Mammary epithelial cell (primary cell): ENCODE measurements at regions of chr2 and their contacts with region 1.

Region 1: GRCh38 chr2:151771599-151772358 is 37.5 kb upstream of the NEB start:
- DNase-seq: no peak
- H3K4me3 ChIP-seq: no peak overlapping the region
- H3K27ac ChIP-seq: no peak overlapping the region
- H3K4me1 ChIP-seq: no peaks in the 10 kb centered on the region
- H3K27me3 ChIP-seq: no peaks in the 10 kb centered on the region
- CTCF ChIP-seq: no peak

Region 2: DNA sequence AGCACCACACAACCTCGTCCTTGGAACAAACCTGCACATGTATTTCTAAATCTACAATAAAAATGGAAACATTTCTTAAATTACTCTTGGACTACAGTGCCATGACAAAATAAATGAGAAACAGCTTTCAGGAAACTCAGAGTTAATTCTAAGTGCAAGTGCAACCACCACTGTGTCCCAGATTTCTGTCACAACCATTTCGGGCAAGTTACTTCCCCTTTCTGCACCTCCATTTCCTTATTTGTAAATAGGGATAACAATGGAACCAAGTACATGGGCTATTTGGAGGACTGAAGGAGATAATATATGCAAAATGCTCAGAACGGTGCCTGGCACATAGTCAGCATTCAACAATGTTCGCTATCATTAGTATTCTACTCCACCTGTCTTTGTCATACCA is 233.8 kb after region 1 on chr2:
- CTCF ChIA-PET with region 1: no interaction called
- dilution Hi-C with region 1: no loop called
- in situ Hi-C with region 1: no loop called
- intact Hi-C with region 1: loop called (anchors 10 kb)
- DNase-seq: no peak
- H3K4me3 ChIP-seq: no peak overlapping the region
- H3K27ac ChIP-seq: no peak overlapping the region
- H3K4me1 ChIP-seq: no peaks in the 10 kb centered on the region
- H3K27me3 ChIP-seq: peaks cover 3% of the 10 kb centered on the region
- CTCF ChIP-seq: no peak

Region 3: DNA sequence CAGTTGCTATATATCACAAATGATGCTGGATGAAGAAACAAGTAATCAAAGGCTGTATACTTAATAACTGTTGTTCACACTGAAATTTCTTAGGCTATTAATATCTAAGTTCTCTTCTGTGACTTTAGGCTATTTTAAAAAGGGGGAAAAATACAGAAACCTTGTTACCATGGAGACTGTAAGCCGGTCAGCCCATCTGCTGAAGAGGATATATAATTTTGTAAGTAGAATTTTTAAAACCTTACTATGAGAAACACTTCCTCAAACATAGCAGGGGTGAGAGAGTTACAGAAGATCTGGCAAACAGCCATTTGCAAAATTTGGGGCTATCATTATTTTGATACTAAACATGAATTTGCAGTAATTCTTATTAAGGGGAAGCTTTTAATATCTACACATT is 299.3 kb after region 1 on chr2:
- CTCF ChIA-PET with region 1: interaction called, 10 read pairs
- dilution Hi-C with region 1: no loop called
- in situ Hi-C with region 1: no loop called
- intact Hi-C with region 1: no loop called
- DNase-seq: no peak
- H3K4me3 ChIP-seq: no peak overlapping the region
- H3K27ac ChIP-seq: no peak overlapping the region
- H3K4me1 ChIP-seq: no peaks in the 10 kb centered on the region
- H3K27me3 ChIP-seq: no peaks in the 10 kb centered on the region
- CTCF ChIP-seq: no peak